ENCODE measurements at regions of chr6 and their contacts with region 1.

Region 1: GRCh38 chr6:44246663-44247337 is at the start of gene HSP90AB1:
- DNase-seq: peak; percentile 88 to 99 (median 94)
- ATAC-seq: peak; percentile 85
- H3K4me3 ChIP-seq: peak within 1 kb of the TSS; percentile 94
- H3K27ac ChIP-seq: peak within 1 kb of the TSS; percentile 98
- H3K4me1 ChIP-seq: peaks cover 22 to 34% of the 10 kb centered on the region in 2 experiments
- H3K27me3 ChIP-seq: no peaks in the 10 kb centered on the region
- CTCF ChIP-seq: no peak
- EP300 ChIP-seq: peak; percentile 34; the same call in 1 of the 2 replicates
- POLR2A ChIP-seq: peak; percentile 100
- RAD21 ChIP-seq: no peak
- polyA plus RNA-seq, gene HSP90AB1: 1,975 to 2,865 TPM

Region 2: DNA sequence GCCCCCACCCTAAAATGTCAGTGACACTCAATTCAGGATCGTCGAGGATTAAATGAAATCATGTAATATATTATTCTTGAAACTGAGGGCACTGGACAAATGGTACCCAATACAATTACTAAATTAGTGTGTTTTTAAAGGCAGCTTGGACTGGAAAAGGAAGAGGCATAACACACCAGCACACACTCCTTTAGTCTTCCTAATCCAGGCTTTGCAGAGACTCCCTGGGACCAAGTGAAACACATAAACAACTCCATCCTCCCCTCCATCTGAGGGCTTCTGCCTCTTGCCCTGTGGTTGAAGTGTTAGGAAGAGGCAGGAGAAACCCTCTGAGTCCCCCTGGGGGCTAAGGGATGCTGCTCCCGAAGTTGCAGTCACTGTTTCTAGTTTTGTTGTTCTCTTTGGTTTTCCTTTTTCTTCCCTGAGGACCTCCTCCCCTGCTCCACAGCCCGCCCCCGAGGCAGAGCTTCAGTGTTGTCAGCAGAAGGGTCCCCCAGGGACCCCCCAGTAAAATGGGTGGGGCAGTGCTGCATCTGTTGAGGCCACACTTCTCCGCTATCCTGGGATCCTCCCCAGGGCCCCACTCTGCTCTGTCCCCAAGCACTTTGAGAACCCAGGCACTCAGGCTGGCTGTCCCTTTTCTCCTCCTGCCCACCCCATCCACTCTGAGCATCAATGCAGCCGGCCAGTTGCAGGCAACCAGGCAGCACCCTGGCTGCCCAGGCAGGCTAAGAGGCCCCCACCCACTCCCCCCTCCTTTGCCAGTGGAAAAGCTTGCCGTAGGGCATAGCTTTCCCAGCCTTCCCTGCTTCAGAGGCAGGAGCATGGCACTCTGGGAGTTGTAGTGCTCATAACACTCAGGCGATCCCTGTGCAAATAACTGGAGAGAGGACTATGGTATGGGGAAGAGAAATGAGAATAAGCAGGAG is 113.5 kb before region 1 on chr6:
- CTCF ChIA-PET with region 1: no interaction called
- POLR2A ChIA-PET with region 1: interaction called, 29 read pairs
- in situ Hi-C with region 1: no loop called
- intact Hi-C with region 1: no loop called
- DNase-seq: peak; percentile 53 to 63 (median 57)
- ATAC-seq: peak; percentile 80
- H3K4me3 ChIP-seq: peak overlapping the region; percentile 12
- H3K27ac ChIP-seq: peak overlapping the region; percentile 66
- H3K4me1 ChIP-seq: peaks cover 57 to 75% of the 10 kb centered on the region in 2 experiments
- H3K27me3 ChIP-seq: no peaks in the 10 kb centered on the region
- CTCF ChIP-seq: 0 out of 6 replicates have a peak, but pooled peaks of 1 of the 3 experiments have one; percentile 11
- EP300 ChIP-seq: no peak
- POLR2A ChIP-seq: no peak
- RAD21 ChIP-seq: no peak

Region 3: GRCh38 chr6:44179072-44179536 is 67.7 kb before region 1 on chr6:
- CTCF ChIA-PET with region 1: no interaction called
- POLR2A ChIA-PET with region 1: interaction called, 17 read pairs
- in situ Hi-C with region 1: no loop called
- intact Hi-C with region 1: no loop called
- DNase-seq: no peak
- ATAC-seq: no peak
- H3K4me3 ChIP-seq: no peak overlapping the region
- H3K27ac ChIP-seq: no peak overlapping the region
- H3K4me1 ChIP-seq: peaks cover 0 to 13% of the 10 kb centered on the region in 2 experiments; a peak in 2 of 5 replicates
- H3K27me3 ChIP-seq: peaks cover 2 to 21% of the 10 kb centered on the region in 2 experiments; a peak in 2 of 5 replicates
- CTCF ChIP-seq: no peak
- EP300 ChIP-seq: no peak
- POLR2A ChIP-seq: no peak
- RAD21 ChIP-seq: no peak

Region 4: GRCh38 chr6:44201638-44202303 is 45.0 kb before region 1 on chr6:
- CTCF ChIA-PET with region 1: no interaction called
- POLR2A ChIA-PET with region 1: interaction called, 23 read pairs
- in situ Hi-C with region 1: no loop called
- intact Hi-C with region 1: no loop called
- DNase-seq: peak; percentile 71 to 79 (median 73)
- ATAC-seq: peak; percentile 78
- H3K4me3 ChIP-seq: no peak overlapping the region
- H3K27ac ChIP-seq: peak overlapping the region; percentile 53; the same call in 2 of the 3 replicates
- H3K4me1 ChIP-seq: peaks cover 28 to 45% of the 10 kb centered on the region in 2 experiments
- H3K27me3 ChIP-seq: no peaks in the 10 kb centered on the region
- CTCF ChIP-seq: no peak
- EP300 ChIP-seq: no peak; the same call in 1 of the 2 replicates
- POLR2A ChIP-seq: 0 out of 2 replicates have a peak, but pooled peaks have one; percentile 39
- RAD21 ChIP-seq: no peak

Region 5: DNA sequence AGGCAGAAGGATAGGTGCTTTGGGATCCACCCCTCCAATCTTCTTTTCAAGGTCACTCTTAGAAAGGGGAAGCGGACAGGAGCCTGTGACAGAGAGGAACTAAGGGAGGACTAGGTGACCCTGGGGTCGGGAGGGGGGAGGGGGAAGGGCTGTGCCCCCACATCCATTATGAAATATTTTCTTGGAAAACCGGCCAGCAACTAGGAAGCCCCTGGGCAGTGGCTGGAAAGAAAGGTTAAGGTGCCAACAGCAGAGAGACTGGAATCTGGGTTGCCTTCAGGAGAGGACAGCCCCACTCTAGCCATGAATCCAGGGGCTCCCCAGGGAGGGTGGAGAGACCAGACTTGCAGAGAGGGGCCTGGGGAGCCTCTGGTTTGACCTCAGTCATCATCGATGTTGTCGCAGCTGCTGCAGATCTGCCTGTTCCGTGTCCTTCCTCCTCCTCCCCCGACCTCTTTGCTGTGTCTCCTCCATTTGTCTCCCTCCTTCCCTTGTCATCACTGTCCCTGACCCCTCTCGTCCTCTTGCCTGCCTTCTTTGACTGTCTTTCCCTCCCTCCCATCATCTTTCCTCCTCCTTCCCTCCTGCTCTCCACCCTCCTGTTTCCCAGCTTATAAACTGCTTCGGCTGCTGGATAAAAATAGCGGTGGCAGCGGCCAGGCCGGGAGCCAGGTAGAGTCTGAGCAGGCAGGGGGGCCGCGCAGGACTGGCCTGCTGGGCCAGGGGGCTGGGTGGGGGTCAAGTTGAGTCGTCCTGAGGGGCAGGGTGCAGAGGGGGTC is 20.2 kb before region 1 on chr6:
- CTCF ChIA-PET with region 1: no interaction called
- POLR2A ChIA-PET with region 1: interaction called, 104 read pairs
- in situ Hi-C with region 1: no loop called
- intact Hi-C with region 1: loop called (anchors 1 kb)
- DNase-seq: peak; percentile 45 to 74 (median 52)
- ATAC-seq: 0 out of 3 replicates have a peak, but pooled peaks have one; percentile 1
- H3K4me3 ChIP-seq: peak overlapping the region; percentile 26; the same call in 1 of the 2 replicates
- H3K27ac ChIP-seq: peak overlapping the region; percentile 75
- H3K4me1 ChIP-seq: peaks cover 57 to 73% of the 10 kb centered on the region in 2 experiments
- H3K27me3 ChIP-seq: no peaks in the 10 kb centered on the region
- CTCF ChIP-seq: no peak
- EP300 ChIP-seq: no peak
- POLR2A ChIP-seq: no peak
- RAD21 ChIP-seq: no peak

Region 6: GRCh38 chr6:44270526-44271405 is 24.0 kb after region 1 on chr6:
- CTCF ChIA-PET with region 1: no interaction called
- POLR2A ChIA-PET with region 1: interaction called, 69 read pairs
- in situ Hi-C with region 1: no loop called
- intact Hi-C with region 1: no loop called
- DNase-seq: peak in 3 of 4 experiments; percentile 53 to 86 (median 85)
- ATAC-seq: no peak; the same call in 2 of the 3 replicates
- H3K4me3 ChIP-seq: peak overlapping the region; percentile 21; the same call in 1 of the 2 replicates
- H3K27ac ChIP-seq: no peak overlapping the region
- H3K4me1 ChIP-seq: peaks cover 0 to 24% of the 10 kb centered on the region in 2 experiments; a peak in 2 of 5 replicates
- H3K27me3 ChIP-seq: peaks cover 53 to 61% of the 10 kb centered on the region in 2 experiments
- CTCF ChIP-seq: no peak
- EP300 ChIP-seq: no peak
- POLR2A ChIP-seq: no peak
- RAD21 ChIP-seq: no peak

Measured in K562 (cell line).